Breast epithelium (tissue), 4 donors: ENCODE measurements at regions of chr10 and their contacts with region 1.

Region 1: GRCh38 chr10:59479426-59479825 is 117.1 kb upstream of the FAM13C start:
- DNase-seq: no peak
- H3K4me3 ChIP-seq: no peak overlapping the region
- H3K27ac ChIP-seq: no peak overlapping the region
- H3K4me1 ChIP-seq: no peaks in the 10 kb centered on the region
- H3K27me3 ChIP-seq: no peaks in the 10 kb centered on the region
- CTCF ChIP-seq: no peak
- POLR2A ChIP-seq: no peak

Region 2: GRCh38 chr10:58651040-58651439 is 828.4 kb before region 1 on chr10:
- intact Hi-C with region 1: loop called (anchors 5 kb)
- DNase-seq: no peak
- H3K4me3 ChIP-seq: no peak overlapping the region
- H3K27ac ChIP-seq: peak overlapping the region; percentile 7 to 40
- H3K4me1 ChIP-seq: no peaks in the 10 kb centered on the region
- H3K27me3 ChIP-seq: no peaks in the 10 kb centered on the region
- CTCF ChIP-seq: no peak
- POLR2A ChIP-seq: no peak

Region 3: GRCh38 chr10:59913547-59914237 is 434.3 kb after region 1 on chr10:
- intact Hi-C with region 1: no loop called
- DNase-seq: no peak
- H3K4me3 ChIP-seq: no peak overlapping the region
- H3K27ac ChIP-seq: no peak overlapping the region
- H3K4me1 ChIP-seq: peaks cover 0 to 7% of the 10 kb centered on the region in 2 donors
- H3K27me3 ChIP-seq: no peaks in the 10 kb centered on the region
- CTCF ChIP-seq: no peak
- POLR2A ChIP-seq: no peak